Activated CD4-positive, alpha-beta memory T cell treated with anti-CD3 and anti-CD28 coated beads for 36 hours (primary cell): ENCODE measurements at regions of chr5 and their contacts with region 1.

Region 1: GRCh38 chr5:61280205-61280604 is 51.9 kb upstream of the ZSWIM6 start:
- DNase-seq: no peak
- H3K4me3 Mint-ChIP-seq: no peak overlapping the region
- H3K27ac Mint-ChIP-seq: no peak overlapping the region
- H3K4me1 Mint-ChIP-seq: peaks cover 28% of the 10 kb centered on the region
- H3K27me3 Mint-ChIP-seq: no peaks in the 10 kb centered on the region

Region 2: DNA sequence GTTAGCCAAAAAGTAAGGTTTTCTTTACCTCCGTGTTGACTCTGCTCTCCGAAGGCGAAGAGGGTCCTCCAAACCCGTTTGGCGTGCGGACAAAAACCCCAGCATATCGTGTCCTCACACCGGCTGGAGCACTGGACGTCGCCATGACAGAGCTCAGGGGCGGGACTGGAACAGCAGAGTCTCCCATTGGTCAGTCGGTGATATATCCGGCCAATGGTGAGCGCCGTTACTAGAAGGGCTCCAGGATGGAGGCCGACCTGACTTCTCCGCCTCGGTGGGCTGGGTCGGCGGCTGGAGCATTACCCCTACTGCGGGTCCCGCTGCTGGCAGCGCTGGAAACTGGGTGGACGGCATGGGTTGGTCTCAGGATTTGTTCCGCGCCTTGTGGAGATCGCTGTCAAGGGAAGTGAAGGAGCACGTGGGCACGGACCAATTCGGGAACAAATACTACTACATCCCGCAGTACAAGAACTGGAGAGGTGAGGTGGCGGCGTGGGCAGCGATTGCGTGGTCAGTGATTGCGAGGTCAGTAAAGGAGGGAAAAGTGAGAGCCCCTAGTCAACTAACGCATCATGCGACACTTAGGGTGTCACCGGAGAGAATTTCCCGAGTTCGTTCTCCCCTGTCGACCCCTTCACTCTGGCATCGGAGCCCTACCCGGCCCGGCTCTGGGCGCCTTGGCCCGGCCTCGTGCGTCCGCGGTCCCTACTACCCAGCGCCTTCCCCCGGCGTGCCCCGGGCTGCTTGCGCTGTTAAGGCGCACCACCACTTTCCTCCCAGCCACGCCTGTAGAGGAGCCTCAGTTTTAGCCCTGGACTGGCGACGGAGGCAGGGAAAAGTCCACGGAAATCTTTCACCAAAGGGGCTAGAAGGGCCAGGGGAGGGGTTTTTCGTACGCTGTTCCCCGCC is 335.0 kb before region 1 on chr5 and contains the starts of genes ERCC8 and NDUFAF2:
- CTCF ChIA-PET with region 1: no interaction called
- POLR2A ChIA-PET with region 1: no interaction called
- intact Hi-C with region 1: loop called (anchors 5 kb)
- DNase-seq: peak; percentile 93
- H3K4me3 Mint-ChIP-seq: no peak within 1 kb of the TSS
- H3K27ac Mint-ChIP-seq: peak within 1 kb of the TSS; percentile 77
- H3K4me1 Mint-ChIP-seq: peaks cover 23% of the 10 kb centered on the region
- H3K27me3 Mint-ChIP-seq: no peaks in the 10 kb centered on the region
- total RNA-seq, gene ERCC8: 7.7 to 9.1 TPM
- total RNA-seq, gene NDUFAF2: 35.6 to 38.4 TPM

Region 3: GRCh38 chr5:61055434-61056006 is 224.7 kb before region 1 on chr5:
- CTCF ChIA-PET with region 1: no interaction called
- POLR2A ChIA-PET with region 1: no interaction called
- intact Hi-C with region 1: loop called (anchors 2 kb)
- DNase-seq: no peak
- H3K4me3 Mint-ChIP-seq: no peak overlapping the region
- H3K27ac Mint-ChIP-seq: no peak overlapping the region
- H3K4me1 Mint-ChIP-seq: peaks cover 4% of the 10 kb centered on the region
- H3K27me3 Mint-ChIP-seq: no peaks in the 10 kb centered on the region

Region 4: DNA sequence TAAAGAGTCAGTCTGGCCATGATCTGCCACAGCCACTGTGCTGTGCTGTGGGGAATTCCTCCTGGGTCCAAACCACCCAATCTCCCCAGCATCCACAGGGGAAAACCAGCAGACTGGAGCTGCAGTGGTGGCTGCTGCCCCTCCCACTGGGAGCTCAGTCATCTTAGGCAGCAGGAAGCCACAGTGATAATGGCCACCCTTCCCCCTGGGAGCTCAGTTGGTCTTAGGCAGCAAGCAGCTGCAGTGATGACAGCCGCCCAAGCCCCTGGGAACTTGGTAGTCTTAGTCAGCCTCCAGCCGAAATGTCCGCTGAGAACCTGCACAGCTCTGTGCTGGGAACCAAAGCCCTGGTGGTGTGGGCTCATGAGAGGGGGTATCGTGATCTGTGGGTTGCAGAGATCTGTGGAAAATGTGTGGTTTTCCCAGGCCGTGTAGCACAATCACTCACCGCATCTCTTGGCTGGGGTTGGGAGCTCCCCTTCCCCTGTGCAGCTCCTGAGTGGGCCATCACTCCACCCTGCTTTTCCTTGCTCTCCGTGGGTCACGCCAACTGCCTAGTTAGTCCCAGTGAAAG is 79.5 kb before region 1 on chr5:
- CTCF ChIA-PET with region 1: no interaction called
- POLR2A ChIA-PET with region 1: interaction called, 4 read pairs
- intact Hi-C with region 1: loop called (anchors 1 kb)
- DNase-seq: peak; percentile 10
- H3K4me3 Mint-ChIP-seq: no peak overlapping the region
- H3K27ac Mint-ChIP-seq: no peak overlapping the region
- H3K4me1 Mint-ChIP-seq: peaks cover 16% of the 10 kb centered on the region
- H3K27me3 Mint-ChIP-seq: peaks cover 41% of the 10 kb centered on the region

Region 5: DNA sequence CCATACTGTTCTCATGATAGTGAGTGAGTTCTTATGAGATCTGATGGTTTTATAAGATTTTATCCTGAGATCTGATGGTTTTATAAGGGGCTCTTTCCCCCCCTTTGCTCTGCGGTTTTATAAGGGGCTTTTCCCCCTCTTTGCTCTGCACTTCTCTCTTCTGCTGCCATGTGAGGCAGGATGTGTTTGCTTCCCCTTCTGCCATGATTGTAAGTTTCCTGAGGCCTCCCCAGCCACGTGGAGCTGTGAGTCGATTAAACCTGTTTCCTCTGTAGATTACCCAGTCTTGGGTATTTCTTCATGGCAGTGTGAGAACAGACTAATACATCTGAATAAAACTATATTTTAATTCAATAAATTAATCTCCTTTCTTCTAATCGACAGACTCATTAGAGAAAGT is 13.1 kb before region 1 on chr5:
- CTCF ChIA-PET with region 1: no interaction called
- POLR2A ChIA-PET with region 1: no interaction called
- intact Hi-C with region 1: no loop called
- DNase-seq: no peak
- H3K4me3 Mint-ChIP-seq: no peak overlapping the region
- H3K27ac Mint-ChIP-seq: no peak overlapping the region
- H3K4me1 Mint-ChIP-seq: peaks cover 14% of the 10 kb centered on the region
- H3K27me3 Mint-ChIP-seq: peaks cover 7% of the 10 kb centered on the region

Region 6: GRCh38 chr5:61408476-61409168 is 128.4 kb after region 1 on chr5:
- CTCF ChIA-PET with region 1: no interaction called
- POLR2A ChIA-PET with region 1: no interaction called
- intact Hi-C with region 1: loop called (anchors 5 kb)
- DNase-seq: peak; percentile 98
- H3K4me3 Mint-ChIP-seq: peak overlapping the region; percentile 55
- H3K27ac Mint-ChIP-seq: peak overlapping the region; percentile 50
- H3K4me1 Mint-ChIP-seq: peaks cover 29% of the 10 kb centered on the region
- H3K27me3 Mint-ChIP-seq: no peaks in the 10 kb centered on the region